Endothelial cell of umbilical vein (primary cell): ENCODE measurements at regions of chr7 and their contacts with region 1.

Region 1: DNA sequence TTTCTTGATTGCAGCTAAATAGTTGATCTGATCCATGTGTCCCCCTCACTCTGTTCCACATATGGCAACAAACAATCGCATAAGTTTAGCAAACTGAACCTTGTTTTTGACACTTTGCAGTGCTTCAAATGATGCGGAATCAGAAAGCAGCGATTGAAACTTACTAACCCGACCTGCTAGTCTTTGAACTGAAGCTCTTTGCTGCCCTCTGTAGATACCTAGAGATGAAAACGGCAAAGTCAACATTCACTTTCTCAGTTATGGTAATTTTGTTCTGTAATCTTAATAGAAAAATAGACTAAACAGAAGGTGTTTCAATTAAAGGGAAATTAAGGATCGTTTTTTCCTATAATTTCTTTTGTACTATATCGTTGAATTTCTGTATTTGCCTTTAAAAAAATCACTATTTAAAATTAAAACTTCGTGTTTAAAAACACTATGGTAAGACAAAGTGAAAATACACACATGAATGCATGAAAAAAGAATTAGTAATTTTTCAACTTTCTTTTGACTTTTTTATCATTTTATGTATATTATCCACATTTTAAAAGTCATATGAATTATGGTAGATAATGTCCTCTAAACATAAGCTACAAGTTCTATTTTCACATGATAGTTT is 276.5 kb downstream of the MAGI2 start:
- DNase-seq: peak; percentile 53
- H3K4me3 ChIP-seq: no peak overlapping the region
- H3K27ac ChIP-seq: no peak overlapping the region
- H3K4me1 ChIP-seq: no peaks in the 10 kb centered on the region
- H3K27me3 ChIP-seq: no peaks in the 10 kb centered on the region
- CTCF ChIP-seq: peak; percentile 48 to 50
- POLR2A ChIP-seq: no peak

Region 2: GRCh38 chr7:78510580-78511188 is 666.3 kb before region 1 on chr7:
- CTCF ChIA-PET with region 1: interaction called, 43 read pairs
- POLR2A ChIA-PET with region 1: no interaction called
- dilution Hi-C with region 1: no loop called
- intact Hi-C with region 1: loop called (anchors 1 kb)
- DNase-seq: peak; percentile 49
- H3K4me3 ChIP-seq: no peak overlapping the region
- H3K27ac ChIP-seq: no peak overlapping the region
- H3K4me1 ChIP-seq: no peaks in the 10 kb centered on the region
- H3K27me3 ChIP-seq: no peaks in the 10 kb centered on the region
- CTCF ChIP-seq: peak; percentile 63 to 69
- POLR2A ChIP-seq: no peak

Region 3: DNA sequence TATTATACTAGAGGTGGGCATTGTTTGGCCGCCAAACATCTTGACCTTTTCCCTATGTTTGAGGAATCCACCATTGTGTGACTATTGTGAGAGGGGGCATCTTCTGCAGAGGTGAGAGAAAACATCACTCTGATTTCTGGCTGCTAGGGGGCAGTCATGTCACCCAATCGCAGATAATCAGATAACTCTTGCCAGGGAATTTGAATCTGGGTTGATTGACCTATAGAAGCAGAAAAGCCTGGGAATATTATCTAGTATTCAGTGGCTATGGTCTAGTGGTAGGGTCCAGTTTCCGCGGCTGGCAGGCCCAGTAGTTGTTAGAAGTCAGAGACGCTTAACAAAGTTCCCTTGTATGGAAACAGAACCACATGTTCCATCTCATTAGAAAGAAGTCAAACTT is 569.9 kb before region 1 on chr7:
- CTCF ChIA-PET with region 1: interaction called, 3 read pairs
- POLR2A ChIA-PET with region 1: no interaction called
- dilution Hi-C with region 1: no loop called
- intact Hi-C with region 1: loop called (anchors 2 kb)
- DNase-seq: no peak
- H3K4me3 ChIP-seq: no peak overlapping the region
- H3K27ac ChIP-seq: no peak overlapping the region
- H3K4me1 ChIP-seq: no peaks in the 10 kb centered on the region
- H3K27me3 ChIP-seq: no peaks in the 10 kb centered on the region
- CTCF ChIP-seq: peak in 1 of 2 donors; percentile 8
- POLR2A ChIP-seq: no peak

Region 4: GRCh38 chr7:78924581-78924980 is 252.4 kb before region 1 on chr7:
- CTCF ChIA-PET with region 1: interaction called, 6 read pairs
- POLR2A ChIA-PET with region 1: no interaction called
- dilution Hi-C with region 1: no loop called
- intact Hi-C with region 1: loop called (anchors 5 kb)
- DNase-seq: no peak
- H3K4me3 ChIP-seq: no peak overlapping the region
- H3K27ac ChIP-seq: no peak overlapping the region
- H3K4me1 ChIP-seq: no peaks in the 10 kb centered on the region
- H3K27me3 ChIP-seq: no peaks in the 10 kb centered on the region
- CTCF ChIP-seq: no peak
- POLR2A ChIP-seq: no peak

Region 5: DNA sequence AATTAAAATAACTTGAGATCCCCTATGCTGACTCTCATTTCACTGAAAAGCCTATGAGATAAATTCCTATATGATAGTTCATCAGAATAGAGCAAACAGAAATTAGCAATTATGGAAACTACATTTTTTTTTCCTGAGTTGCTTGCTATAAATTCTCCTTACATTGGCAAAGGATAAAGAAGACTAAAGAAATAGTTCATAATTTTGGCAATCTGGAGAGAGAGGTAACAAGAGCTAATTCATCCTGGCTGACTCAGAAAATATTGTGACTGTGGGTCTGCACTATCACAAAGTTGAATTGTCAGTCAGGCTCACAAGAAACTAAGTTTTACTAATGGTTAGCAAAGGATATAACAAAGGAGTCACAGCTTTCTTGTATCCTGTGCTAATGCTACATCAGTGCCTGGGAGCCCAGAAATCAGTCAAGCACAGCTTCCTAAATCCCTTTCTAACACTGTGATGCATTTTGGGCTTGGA is 206.5 kb before region 1 on chr7:
- CTCF ChIA-PET with region 1: no interaction called
- POLR2A ChIA-PET with region 1: no interaction called
- dilution Hi-C with region 1: no loop called
- intact Hi-C with region 1: no loop called
- DNase-seq: no peak
- H3K4me3 ChIP-seq: no peak overlapping the region
- H3K27ac ChIP-seq: no peak overlapping the region
- H3K4me1 ChIP-seq: no peaks in the 10 kb centered on the region
- H3K27me3 ChIP-seq: no peaks in the 10 kb centered on the region
- CTCF ChIP-seq: no peak
- POLR2A ChIP-seq: no peak

Region 6: DNA sequence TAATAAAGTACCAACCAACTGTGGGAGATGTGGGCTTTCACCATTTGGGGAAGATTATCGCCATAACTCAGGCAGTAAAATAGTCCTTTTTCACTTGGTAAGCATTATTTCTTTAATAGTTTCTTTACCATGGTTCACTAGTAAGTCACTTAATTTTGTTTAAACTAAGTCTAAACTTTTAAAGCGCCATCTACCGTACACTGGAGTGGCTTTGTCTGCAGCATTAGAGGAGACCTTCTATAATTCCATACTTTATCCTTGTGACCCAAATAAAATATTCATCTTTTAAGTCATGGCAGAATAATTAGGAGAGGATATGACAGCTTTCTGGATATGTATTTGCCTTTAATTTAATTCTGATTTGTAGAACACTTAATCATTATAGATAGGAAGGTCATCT is 191.5 kb before region 1 on chr7:
- CTCF ChIA-PET with region 1: no interaction called
- POLR2A ChIA-PET with region 1: no interaction called
- dilution Hi-C with region 1: no loop called
- intact Hi-C with region 1: no loop called
- DNase-seq: no peak
- H3K4me3 ChIP-seq: no peak overlapping the region
- H3K27ac ChIP-seq: no peak overlapping the region
- H3K4me1 ChIP-seq: no peaks in the 10 kb centered on the region
- H3K27me3 ChIP-seq: no peaks in the 10 kb centered on the region
- CTCF ChIP-seq: no peak
- POLR2A ChIP-seq: no peak

Region 7: DNA sequence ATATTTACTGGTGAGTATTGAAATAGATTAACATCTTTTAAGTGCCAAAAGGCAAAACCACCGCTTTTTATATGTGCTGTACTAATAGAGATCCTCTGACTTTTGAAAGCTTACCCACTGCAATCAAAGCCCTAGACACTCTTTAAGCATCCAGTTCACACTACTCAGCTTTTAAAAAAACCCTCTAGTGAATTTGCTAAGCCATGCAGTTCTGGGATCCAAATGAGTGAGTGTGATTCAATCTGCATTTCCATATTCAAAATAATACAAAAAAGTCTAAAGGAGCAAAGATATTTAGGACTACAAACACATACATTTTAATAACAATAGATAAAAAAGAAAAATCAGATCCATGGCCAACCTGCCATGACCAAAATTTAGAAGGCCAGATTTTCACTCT is 11.7 kb before region 1 on chr7:
- CTCF ChIA-PET with region 1: interaction called, 18 read pairs
- POLR2A ChIA-PET with region 1: no interaction called
- dilution Hi-C with region 1: no loop called
- intact Hi-C with region 1: no loop called
- DNase-seq: no peak
- H3K4me3 ChIP-seq: no peak overlapping the region
- H3K27ac ChIP-seq: no peak overlapping the region
- H3K4me1 ChIP-seq: no peaks in the 10 kb centered on the region
- H3K27me3 ChIP-seq: no peaks in the 10 kb centered on the region
- CTCF ChIP-seq: no peak
- POLR2A ChIP-seq: no peak